ENCODE measurements at regions of chr4 and their contacts with region 1.

Region 1: DNA sequence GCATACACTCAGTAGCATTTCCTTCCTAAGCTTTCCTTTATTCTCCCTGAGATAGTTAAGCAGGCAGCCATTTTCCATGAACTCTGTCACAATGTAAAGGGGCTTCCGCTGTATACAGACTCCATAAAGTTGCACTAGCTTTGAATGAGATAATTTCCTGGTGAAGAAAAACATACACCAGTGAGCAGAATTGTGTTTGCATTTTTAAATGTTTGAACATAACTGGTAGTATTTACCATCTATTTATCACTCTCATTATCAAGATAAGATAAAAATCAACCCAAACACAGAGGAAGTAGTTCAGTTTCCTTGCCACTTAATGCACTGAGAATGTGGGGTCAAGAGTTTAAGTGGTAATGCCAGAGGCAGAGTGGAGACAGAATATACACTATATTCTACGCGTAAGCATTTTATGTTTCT is 54.1 kb downstream of the TXK start:
- DNase-seq: no peak

Region 2: GRCh38 chr4:48008021-48008596 is 71.9 kb before region 1 on chr4:
- intact Hi-C with region 1: loop called (anchors 10 kb)
- DNase-seq: no peak

Region 3: GRCh38 chr4:48016141-48017103 is 63.6 kb before region 1 on chr4 and contains the starts of genes CNGA1 and NIPAL1:
- intact Hi-C with region 1: loop called in 1 of 2 experiments (anchors 10 kb)
- DNase-seq: no peak
- total RNA-seq, gene CNGA1: 0.57 to 0.60 TPM
- total RNA-seq, gene NIPAL1: 0.28 to 0.48 TPM

Region 4: DNA sequence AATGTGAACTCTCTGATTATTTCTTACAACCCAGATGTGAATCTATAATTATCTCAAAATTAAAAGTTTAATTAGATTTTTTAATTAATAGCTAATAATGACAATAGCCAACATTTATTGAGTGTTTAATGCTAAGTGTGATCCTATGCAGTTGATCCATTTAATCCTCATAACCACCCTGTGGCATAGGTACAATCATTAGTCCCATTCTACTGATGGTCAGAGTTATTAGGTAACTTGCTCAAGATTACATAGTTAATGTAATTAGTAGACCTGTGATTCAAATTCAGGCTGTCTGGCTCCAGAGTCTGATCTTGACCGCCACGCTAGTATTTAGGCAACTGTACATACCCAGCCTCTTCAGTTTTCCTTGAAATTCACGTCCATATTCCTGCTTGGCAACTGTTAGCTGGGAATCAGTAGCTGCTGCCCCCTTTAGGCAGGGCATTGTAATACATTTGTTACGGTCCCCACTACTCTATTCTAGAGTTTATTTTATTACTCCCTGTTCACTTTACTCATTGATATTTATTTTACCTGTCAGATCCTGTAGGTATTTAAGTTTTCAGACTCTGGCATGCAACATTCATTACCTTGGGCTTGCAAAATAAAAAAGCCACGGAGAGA is 210.3 kb after region 1 on chr4:
- intact Hi-C with region 1: no loop called
- DNase-seq: no peak

Measured in posterior vena cava (tissue), 2 donors.